Heart left ventricle (tissue), 16 donors: ENCODE measurements at regions of chr10 and their contacts with region 1.

Region 1: GRCh38 chr10:18350340-18350739 is 210.1 kb downstream of the CACNB2 start:
- DNase-seq: no peak
- ATAC-seq: peak in 3 of 4 donors; percentile 16 to 39 (median 31)
- H3K4me3 ChIP-seq: no peak overlapping the region
- H3K27ac ChIP-seq: peak overlapping the region in 10 of 12 donors; percentile 1 to 65 (median 55)
- H3K4me1 ChIP-seq: peaks cover 0 to 24% (median 2%) of the 10 kb centered on the region in 12 donors
- H3K27me3 ChIP-seq: no peaks in the 10 kb centered on the region
- CTCF ChIP-seq: no peak
- POLR2A ChIP-seq: no peak

Region 2: GRCh38 chr10:18463673-18464211 is 113.4 kb after region 1 on chr10:
- intact Hi-C with region 1: loop called in 2 of 10 experiments (anchors 5 to 10 kb)
- DNase-seq: peak in 4 of 5 donors; percentile 23 to 69 (median 47)
- ATAC-seq: peak; percentile 83 to 92 (median 87)
- H3K4me3 ChIP-seq: no peak overlapping the region
- H3K27ac ChIP-seq: peak overlapping the region in 11 of 12 donors; percentile 47 to 86 (median 79)
- H3K4me1 ChIP-seq: peaks cover 0 to 31% (median 4%) of the 10 kb centered on the region in 12 donors
- H3K27me3 ChIP-seq: no peaks in the 10 kb centered on the region
- CTCF ChIP-seq: no peak
- POLR2A ChIP-seq: no peak